ENCODE measurements at regions of chr16 and their contacts with region 1.

Region 1: GRCh38 chr16:87491522-87492293 is 1.1 kb downstream of the ZCCHC14 start:
- H3K4me3 ChIP-seq: peak overlapping the region; percentile 43
- H3K27ac ChIP-seq: peak overlapping the region; percentile 66; the same call in 1 of the 2 replicates
- H3K4me1 ChIP-seq: peaks cover 5% of the 10 kb centered on the region
- CTCF ChIP-seq: no peak; the same call in 1 of the 2 replicates

Region 2: DNA sequence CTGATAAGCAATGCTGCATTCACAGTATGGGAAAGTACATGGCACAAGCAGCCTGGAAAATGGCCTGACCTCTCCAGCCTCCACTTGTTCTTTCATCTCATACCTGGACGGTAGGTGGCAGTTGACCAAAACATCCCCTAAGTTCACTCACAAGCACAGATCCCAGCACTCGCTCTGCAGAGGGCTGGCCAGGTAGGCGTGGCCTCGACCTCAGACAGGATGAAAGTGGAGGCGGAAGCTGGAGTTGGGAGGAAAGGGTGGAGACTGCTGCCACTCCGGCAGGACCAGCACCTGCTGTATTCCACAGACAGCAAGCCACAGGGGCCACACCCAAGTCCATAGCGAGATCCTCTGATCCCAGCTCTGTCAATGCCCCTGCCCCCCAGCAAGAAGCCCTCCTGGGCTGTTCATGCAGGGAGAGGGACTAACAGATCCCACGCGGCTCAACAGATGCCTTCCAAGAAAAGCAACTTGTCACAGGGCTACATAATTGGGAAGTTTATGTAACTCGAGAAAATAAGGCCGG is 30.2 kb before region 1 on chr16:
- CTCF ChIA-PET with region 1: interaction called, 12 read pairs
- POLR2A ChIA-PET with region 1: interaction called, 3 read pairs
- H3K4me3 ChIP-seq: peak overlapping the region; percentile 16; the same call in 1 of the 2 replicates
- H3K27ac ChIP-seq: no peak overlapping the region
- H3K4me1 ChIP-seq: peaks cover 29% of the 10 kb centered on the region
- CTCF ChIP-seq: 0 out of 2 replicates have a peak, but pooled peaks have one; percentile 48

Measured in HEK293 (cell line).